ENCODE measurements at regions of chr6 and their contacts with region 1.

Region 1: GRCh38 chr6:52216932-52217575 is 27.2 kb downstream of the IL17F start:
- DNase-seq: no peak
- H3K4me3 ChIP-seq: no peak overlapping the region
- H3K4me3 Mint-ChIP-seq: no peak overlapping the region
- H3K27ac Mint-ChIP-seq: no peak overlapping the region
- H3K4me1 ChIP-seq: 0 out of 2 replicates have a peak, but pooled peaks cover 3% of the 10 kb centered on the region
- H3K4me1 Mint-ChIP-seq: peaks cover 6% of the 10 kb centered on the region
- H3K27me3 ChIP-seq: no peaks in the 10 kb centered on the region
- H3K27me3 Mint-ChIP-seq: peaks cover 8% of the 10 kb centered on the region
- CTCF ChIP-seq: no peak

Region 2: DNA sequence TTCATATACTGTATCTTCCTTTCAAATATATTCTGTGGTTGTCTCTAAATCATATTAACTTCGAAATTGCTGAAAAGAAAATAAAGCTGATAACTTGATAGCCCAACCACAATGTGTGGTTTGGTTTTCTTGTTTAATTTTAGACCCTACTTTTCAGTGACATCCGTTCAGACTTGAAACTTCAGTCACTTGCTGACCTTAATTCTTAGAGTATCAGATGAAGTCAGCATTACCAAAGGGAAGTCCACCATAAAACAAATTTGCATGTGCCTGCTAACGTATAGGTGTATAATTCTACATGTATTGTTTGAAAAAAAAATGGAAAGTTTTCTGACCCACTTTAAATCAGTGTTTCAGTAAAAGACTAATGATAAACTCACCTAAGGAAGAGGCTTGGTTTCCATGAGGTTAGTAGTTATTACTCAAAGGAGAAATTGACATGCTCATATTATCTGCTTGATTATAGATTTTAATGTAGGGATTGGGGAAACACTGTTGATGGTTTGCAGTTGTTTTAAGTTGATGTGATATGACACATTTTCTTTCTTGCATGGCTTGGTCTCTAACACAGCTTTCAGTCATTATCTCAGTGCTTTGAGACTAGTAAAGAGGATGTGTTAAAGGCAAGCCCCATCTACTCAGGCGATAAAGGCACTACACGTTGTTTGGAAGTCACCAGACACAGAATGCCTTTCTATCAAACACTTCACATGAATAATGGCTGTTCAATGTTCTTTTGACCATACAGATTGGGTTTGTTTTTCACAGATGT is 36.1 kb before region 1 on chr6:
- CTCF ChIA-PET with region 1: no interaction called
- POLR2A ChIA-PET with region 1: no interaction called
- intact Hi-C with region 1: loop called (anchors 5 kb)
- DNase-seq: no peak
- H3K4me3 ChIP-seq: no peak overlapping the region
- H3K4me3 Mint-ChIP-seq: no peak overlapping the region
- H3K27ac Mint-ChIP-seq: no peak overlapping the region
- H3K4me1 ChIP-seq: no peaks in the 10 kb centered on the region
- H3K4me1 Mint-ChIP-seq: no peaks in the 10 kb centered on the region
- H3K27me3 ChIP-seq: no peaks in the 10 kb centered on the region
- H3K27me3 Mint-ChIP-seq: peaks cover 23% of the 10 kb centered on the region
- CTCF ChIP-seq: no peak